Upper lobe of right lung (tissue), 1 donor: ENCODE measurements at regions of chr14 and their contacts with region 1.

Region 1: DNA sequence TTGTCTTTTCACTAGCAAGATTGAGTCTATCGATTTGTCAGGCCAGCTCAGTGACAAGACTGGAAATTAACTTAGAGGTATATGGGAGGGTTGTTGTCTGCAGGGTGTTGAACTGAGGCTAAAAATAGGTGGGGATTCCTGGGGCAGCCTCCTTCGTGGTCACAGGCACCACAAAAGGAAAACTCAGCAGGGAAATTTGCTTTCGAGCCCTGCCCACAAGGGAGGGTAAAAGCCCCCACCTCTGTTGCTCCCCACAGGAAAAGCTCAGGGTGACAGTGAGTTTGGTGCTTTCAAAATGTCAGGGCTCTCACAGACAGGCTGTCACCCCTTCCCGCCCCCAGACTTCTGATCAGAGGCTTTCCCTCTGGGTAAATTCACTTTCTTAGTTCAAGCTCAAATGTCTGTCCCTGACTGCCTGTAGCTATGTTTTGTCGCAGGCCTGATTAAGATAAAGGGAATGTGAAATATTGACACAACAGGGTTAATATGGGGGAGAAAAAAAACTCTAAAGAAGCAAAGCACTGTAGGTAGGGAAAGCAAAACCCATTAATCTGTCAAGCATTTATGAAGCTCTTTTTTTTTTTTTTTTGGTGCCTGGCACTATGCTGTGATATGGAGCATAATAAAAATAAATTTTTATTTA is 11.7 kb upstream of the NFKBIA start:
- DNase-seq: no peak
- ATAC-seq: no peak
- H3K4me3 ChIP-seq: no peak overlapping the region
- H3K27ac ChIP-seq: peak overlapping the region; percentile 18
- H3K4me1 ChIP-seq: peaks cover 23% of the 10 kb centered on the region
- H3K27me3 ChIP-seq: no peaks in the 10 kb centered on the region
- CTCF ChIP-seq: no peak

Region 2: DNA sequence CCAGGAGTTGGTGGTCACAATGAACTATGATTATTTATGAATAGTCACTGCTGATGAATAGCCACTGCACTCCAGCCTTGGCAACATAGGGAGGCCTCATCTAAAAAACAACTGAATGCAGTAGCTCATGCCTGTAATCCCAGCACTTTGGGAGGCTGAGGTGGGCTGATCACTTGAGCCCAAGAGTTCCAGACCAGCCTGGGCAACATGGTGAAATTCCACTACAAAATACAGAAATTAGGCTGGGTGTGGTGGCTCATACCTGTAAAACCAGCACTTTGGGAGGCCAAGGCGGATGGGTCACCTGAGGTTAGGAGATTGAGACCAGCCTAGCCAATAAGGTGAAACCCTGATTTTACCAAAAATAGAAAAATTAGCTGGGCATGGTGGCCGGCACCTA is 383.7 kb before region 1 on chr14:
- intact Hi-C with region 1: no loop called
- DNase-seq: no peak
- ATAC-seq: no peak
- H3K4me3 ChIP-seq: no peak overlapping the region
- H3K27ac ChIP-seq: no peak overlapping the region
- H3K4me1 ChIP-seq: no peaks in the 10 kb centered on the region
- H3K27me3 ChIP-seq: no peaks in the 10 kb centered on the region
- CTCF ChIP-seq: no peak

Region 3: GRCh38 chr14:35134328-35135123 is 281.7 kb before region 1 on chr14:
- intact Hi-C with region 1: loop called (anchors 5 kb)
- DNase-seq: no peak
- ATAC-seq: peak; percentile 22
- H3K4me3 ChIP-seq: no peak overlapping the region
- H3K27ac ChIP-seq: no peak overlapping the region
- H3K4me1 ChIP-seq: no peaks in the 10 kb centered on the region
- H3K27me3 ChIP-seq: no peaks in the 10 kb centered on the region
- CTCF ChIP-seq: no peak

Region 4: DNA sequence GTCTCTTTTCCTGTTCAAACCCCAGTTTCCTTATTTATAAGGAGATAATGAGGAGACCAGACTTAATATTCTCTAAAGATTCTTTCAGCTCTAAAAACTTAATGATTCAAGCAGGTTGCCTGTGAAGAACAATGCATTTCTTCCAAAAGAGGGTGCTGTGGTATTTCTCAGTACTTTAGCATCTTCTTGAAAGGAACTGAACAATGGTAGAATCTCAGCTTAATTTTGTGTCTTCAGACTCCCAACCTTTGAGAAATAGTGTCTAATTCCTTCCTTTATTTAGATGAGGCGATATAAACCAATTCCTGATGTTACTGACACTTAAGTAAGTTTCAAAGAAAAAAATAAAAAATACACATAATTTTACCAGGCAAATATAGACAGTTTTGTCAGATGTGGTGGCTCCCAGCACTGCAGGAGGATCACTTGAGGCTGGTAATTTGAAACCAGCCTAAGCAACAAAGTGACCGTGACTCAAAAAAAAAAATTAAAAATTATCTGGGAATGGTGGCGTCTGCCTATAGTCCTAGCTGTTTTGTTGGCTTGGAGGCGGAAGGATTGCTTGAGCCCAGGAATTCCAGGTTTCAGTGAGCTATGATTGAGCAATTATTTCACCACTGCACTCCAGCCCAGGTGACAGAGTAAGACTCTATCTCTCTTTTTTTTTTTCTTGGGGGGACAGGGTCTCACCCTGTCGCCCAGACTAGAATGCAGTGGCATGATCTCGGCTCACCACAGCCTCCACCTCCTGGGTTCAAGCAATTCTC is 200.9 kb before region 1 on chr14:
- intact Hi-C with region 1: loop called (anchors 10 kb)
- DNase-seq: no peak
- ATAC-seq: peak; percentile 74
- H3K4me3 ChIP-seq: no peak overlapping the region
- H3K27ac ChIP-seq: peak overlapping the region; percentile 6
- H3K4me1 ChIP-seq: peaks cover 12% of the 10 kb centered on the region
- H3K27me3 ChIP-seq: no peaks in the 10 kb centered on the region
- CTCF ChIP-seq: peak; percentile 57